ENCODE measurements at regions of chr1 and their contacts with region 1.

Region 1: DNA sequence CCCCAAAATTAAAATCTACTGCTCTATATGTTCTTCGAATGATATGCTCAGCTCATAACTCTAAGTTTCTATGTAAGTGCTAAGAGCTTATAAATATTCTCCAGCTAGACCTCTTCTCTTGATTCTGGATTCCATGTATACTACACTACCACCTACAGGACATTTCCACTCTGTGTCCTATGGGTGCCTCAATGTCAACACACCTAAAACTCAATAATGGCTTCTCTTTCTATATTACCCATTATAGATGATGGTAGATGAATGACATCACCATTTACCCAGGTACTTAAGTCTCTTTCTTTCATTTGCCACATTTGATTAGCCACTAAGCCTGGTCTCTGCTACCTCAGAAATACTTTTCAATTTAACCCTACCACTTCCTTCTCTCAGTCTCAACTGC is 41.3 kb downstream of the TBX19 start:
- DNase-seq: peak; percentile 76
- H3K4me3 Mint-ChIP-seq: no peak overlapping the region
- H3K27ac Mint-ChIP-seq: no peak overlapping the region
- H3K4me1 Mint-ChIP-seq: peaks cover 13% of the 10 kb centered on the region
- H3K27me3 Mint-ChIP-seq: no peaks in the 10 kb centered on the region
- CTCF ChIP-seq: peak; percentile 52

Region 2: GRCh38 chr1:168092566-168093355 is 229.2 kb before region 1 on chr1:
- CTCF ChIA-PET with region 1: interaction called, 14 read pairs
- POLR2A ChIA-PET with region 1: no interaction called
- intact Hi-C with region 1: loop called (anchors 1 kb)
- DNase-seq: peak; percentile 57
- H3K4me3 Mint-ChIP-seq: no peak overlapping the region
- H3K27ac Mint-ChIP-seq: no peak overlapping the region
- H3K4me1 Mint-ChIP-seq: peaks cover 4% of the 10 kb centered on the region
- H3K27me3 Mint-ChIP-seq: no peaks in the 10 kb centered on the region
- CTCF ChIP-seq: peak; percentile 61

Region 3: GRCh38 chr1:168178638-168179437 is 143.1 kb before region 1 on chr1 and contains the start of gene TIPRL:
- CTCF ChIA-PET with region 1: no interaction called
- POLR2A ChIA-PET with region 1: interaction called, 4 read pairs
- intact Hi-C with region 1: loop called (anchors 1 kb)
- DNase-seq: peak; percentile 100
- H3K4me3 Mint-ChIP-seq: no peak within 1 kb of the TSS
- H3K27ac Mint-ChIP-seq: no peak within 1 kb of the TSS
- H3K4me1 Mint-ChIP-seq: peaks cover 7% of the 10 kb centered on the region
- H3K27me3 Mint-ChIP-seq: no peaks in the 10 kb centered on the region
- CTCF ChIP-seq: peak; percentile 73
- total RNA-seq, gene TIPRL: 90.9 and 111 TPM in 2 replicates

Region 4: GRCh38 chr1:168202941-168203654 is 118.8 kb before region 1 on chr1:
- CTCF ChIA-PET with region 1: interaction called, 10 read pairs
- POLR2A ChIA-PET with region 1: no interaction called
- intact Hi-C with region 1: no loop called
- DNase-seq: peak; percentile 72
- H3K4me3 Mint-ChIP-seq: no peak overlapping the region
- H3K27ac Mint-ChIP-seq: peak overlapping the region; percentile 69
- H3K4me1 Mint-ChIP-seq: peaks cover 27% of the 10 kb centered on the region
- H3K27me3 Mint-ChIP-seq: no peaks in the 10 kb centered on the region
- CTCF ChIP-seq: no peak

Region 5: DNA sequence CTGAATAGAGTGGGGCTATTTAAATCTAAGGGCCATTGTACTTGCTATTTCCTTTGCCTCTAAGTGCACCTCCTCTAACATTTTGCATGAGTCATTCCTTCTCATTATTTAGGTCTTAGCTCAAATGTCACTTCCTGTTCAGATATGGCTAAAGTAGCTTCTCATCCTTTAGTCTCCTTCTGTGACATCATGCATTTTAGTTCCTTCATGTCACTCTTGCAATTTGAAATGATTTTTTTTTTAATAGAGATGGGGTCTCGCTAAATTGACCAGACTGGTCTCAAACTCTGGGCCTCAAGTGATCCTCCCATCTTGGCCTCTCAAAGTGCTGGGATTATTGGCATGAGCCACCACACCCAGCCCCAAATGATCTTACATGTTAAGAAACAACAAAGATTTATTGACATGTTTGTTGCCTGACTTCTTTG is 34.7 kb before region 1 on chr1:
- CTCF ChIA-PET with region 1: interaction called, 5 read pairs
- POLR2A ChIA-PET with region 1: interaction called, 4 read pairs
- intact Hi-C with region 1: loop called (anchors 5 kb)
- DNase-seq: peak; percentile 58
- H3K4me3 Mint-ChIP-seq: no peak overlapping the region
- H3K27ac Mint-ChIP-seq: no peak overlapping the region
- H3K4me1 Mint-ChIP-seq: peaks cover 37% of the 10 kb centered on the region
- H3K27me3 Mint-ChIP-seq: no peaks in the 10 kb centered on the region
- CTCF ChIP-seq: no peak

Region 6: DNA sequence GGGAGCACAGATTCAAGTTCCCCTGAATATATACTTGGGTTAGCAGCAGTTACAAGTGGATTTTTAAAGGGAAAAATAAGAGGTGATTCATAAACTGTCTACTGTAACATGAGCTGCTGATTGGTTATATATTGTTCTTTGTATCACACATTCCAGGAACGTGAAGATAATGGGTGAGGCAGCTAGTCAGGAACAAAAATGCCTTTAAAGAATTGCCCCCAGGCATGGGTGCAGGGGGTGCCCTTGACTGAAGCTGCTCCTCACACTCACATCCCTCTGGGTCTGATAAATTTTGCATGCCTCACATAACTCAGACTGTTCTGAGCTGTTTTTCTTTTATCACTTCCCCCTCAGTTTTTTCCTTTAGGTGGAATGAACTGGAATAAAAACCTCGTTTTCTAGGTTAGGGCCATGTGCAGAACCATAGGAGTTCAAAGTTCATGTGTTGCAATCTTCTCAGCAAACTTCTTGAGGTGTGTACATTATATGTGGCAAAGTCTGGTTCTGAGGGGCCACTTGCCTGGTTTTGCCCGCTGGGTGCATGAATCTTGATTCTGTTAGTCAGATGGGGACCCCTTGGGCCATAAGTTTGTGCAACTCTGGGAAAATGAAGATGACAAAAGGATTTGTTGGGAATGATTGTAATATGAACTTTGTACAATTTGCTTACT is 20.1 kb before region 1 on chr1:
- CTCF ChIA-PET with region 1: interaction called, 15 read pairs
- POLR2A ChIA-PET with region 1: interaction called, 11 read pairs
- intact Hi-C with region 1: no loop called
- DNase-seq: peak; percentile 88
- H3K4me3 Mint-ChIP-seq: no peak overlapping the region
- H3K27ac Mint-ChIP-seq: peak overlapping the region; percentile 78
- H3K4me1 Mint-ChIP-seq: peaks cover 37% of the 10 kb centered on the region
- H3K27me3 Mint-ChIP-seq: no peaks in the 10 kb centered on the region
- CTCF ChIP-seq: no peak

Region 7: DNA sequence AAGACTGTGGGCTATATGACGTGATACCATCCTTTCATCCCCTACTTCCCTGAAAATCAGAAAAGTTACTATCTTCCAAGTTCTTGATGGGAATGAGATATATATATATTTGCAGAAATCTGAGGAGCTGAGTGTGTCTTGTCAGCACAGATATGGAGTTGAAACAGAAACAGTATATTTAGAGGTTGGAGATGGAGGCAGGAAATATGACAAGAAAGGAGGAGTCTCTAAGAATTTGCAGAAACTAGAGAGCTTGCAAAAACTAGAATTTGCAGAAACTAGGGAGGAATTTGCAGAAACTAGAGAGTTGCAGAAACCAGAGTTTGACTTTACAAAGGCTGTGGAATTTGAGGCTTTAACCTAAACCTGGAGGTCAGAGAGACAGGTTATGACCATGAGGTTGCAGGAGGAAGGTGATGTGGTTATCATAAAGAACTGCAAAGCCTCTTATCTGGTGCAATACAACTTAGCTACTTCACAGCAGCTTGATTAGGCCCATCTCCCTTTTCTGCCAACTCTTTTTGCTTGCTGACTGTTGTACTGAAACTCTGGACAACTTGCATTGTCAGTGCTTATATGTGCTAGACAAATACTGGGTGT is 199.6 kb after region 1 on chr1:
- CTCF ChIA-PET with region 1: no interaction called
- POLR2A ChIA-PET with region 1: no interaction called
- intact Hi-C with region 1: no loop called
- DNase-seq: no peak
- H3K4me3 Mint-ChIP-seq: no peak overlapping the region
- H3K27ac Mint-ChIP-seq: no peak overlapping the region
- H3K4me1 Mint-ChIP-seq: no peaks in the 10 kb centered on the region
- H3K27me3 Mint-ChIP-seq: no peaks in the 10 kb centered on the region
- CTCF ChIP-seq: no peak

Measured in MCF 10A (cell line).